Common myeloid progenitor, CD34-positive (primary cell): ENCODE measurements at regions of chr12 and their contacts with region 1.

Region 1: GRCh38 chr12:98606357-98606988 is 13.0 kb downstream of the SLC25A3 start:
- DNase-seq: peak in 2 of 3 donors; percentile 27 to 33
- H3K4me3 ChIP-seq: peak overlapping the region in 1 of 7 experiments; percentile 26
- H3K27ac ChIP-seq: no peak overlapping the region
- H3K4me1 ChIP-seq: peaks cover 0 to 15% (median 7%) of the 10 kb centered on the region in 4 experiments
- H3K27me3 ChIP-seq: no peaks in the 10 kb centered on the region

Region 2: GRCh38 chr12:98593351-98594049 is 13.0 kb before region 1 on chr12 and contains the start of gene SLC25A3:
- CTCF ChIA-PET with region 1: interaction called, 47 read pairs
- POLR2A ChIA-PET with region 1: interaction called, 4 read pairs
- DNase-seq: peak; percentile 98 to 99 (median 99)
- H3K4me3 ChIP-seq: peak within 1 kb of the TSS; percentile 85 to 100 (median 99)
- H3K27ac ChIP-seq: peak within 1 kb of the TSS; percentile 96 to 98
- H3K4me1 ChIP-seq: peaks cover 10 to 20% (median 13%) of the 10 kb centered on the region in 4 experiments
- H3K27me3 ChIP-seq: no peaks in the 10 kb centered on the region

Region 3: GRCh38 chr12:98645403-98646067 is 39.1 kb after region 1 on chr12:
- CTCF ChIA-PET with region 1: interaction called, 13 read pairs
- POLR2A ChIA-PET with region 1: no interaction called
- DNase-seq: peak; percentile 25 to 65 (median 62)
- H3K4me3 ChIP-seq: peak overlapping the region; percentile 94 to 99 (median 98)
- H3K27ac ChIP-seq: peak overlapping the region in 1 of 2 experiments; percentile 87
- H3K4me1 ChIP-seq: peaks cover 3 to 29% (median 17%) of the 10 kb centered on the region in 4 experiments
- H3K27me3 ChIP-seq: no peaks in the 10 kb centered on the region

Region 4: DNA sequence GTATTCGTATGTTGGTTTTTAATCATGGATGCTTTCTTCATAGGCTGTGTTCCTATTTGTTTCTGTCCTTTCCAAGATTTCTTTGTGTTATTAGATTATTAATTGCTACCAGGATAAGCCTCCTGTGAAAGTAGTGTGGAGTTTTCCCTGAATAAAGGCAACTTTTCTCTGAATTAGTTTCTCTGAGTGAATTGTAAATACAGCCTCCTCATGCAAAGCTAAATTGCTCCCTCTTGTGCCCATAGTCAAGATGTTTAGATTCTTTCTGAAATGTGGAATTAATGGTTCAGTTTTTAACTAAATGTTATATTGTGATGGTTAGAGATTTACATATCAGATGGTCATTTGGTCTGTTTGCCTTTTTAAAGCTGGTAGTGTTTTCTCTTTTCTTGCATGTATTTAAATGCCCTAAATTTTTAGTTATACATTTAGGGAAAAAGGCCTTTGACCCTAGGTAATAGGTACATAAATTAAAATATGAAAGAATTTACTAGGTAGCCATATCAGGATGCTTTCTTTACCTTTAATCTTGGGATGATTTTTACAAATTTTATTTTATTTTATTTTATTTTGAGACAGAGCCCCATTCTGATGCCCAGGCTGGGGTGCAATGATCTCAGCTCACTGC is 47.5 kb after region 1 on chr12:
- CTCF ChIA-PET with region 1: interaction called, 13 read pairs
- POLR2A ChIA-PET with region 1: no interaction called
- DNase-seq: peak; percentile 71 to 82 (median 80)
- H3K4me3 ChIP-seq: no peak overlapping the region
- H3K27ac ChIP-seq: no peak overlapping the region
- H3K4me1 ChIP-seq: peaks cover 0 to 9% (median 2%) of the 10 kb centered on the region in 4 experiments
- H3K27me3 ChIP-seq: no peaks in the 10 kb centered on the region